Activated T-helper 1 cell treated with anti-CD3 and anti-CD28 coated beads, Interleukin-12 subunit alpha, Interleukin-12 subunit beta, Interleukin-2, Interleukin-4 antibody, amounts not matched to agents 30 ng/mL and 10 ng/mL and 1 ng/mL, durations not matched to agents 14 hours and 24 hours and 36 hours (primary cell): ENCODE measurements at regions of chr12 and their contacts with region 1.

Region 1: DNA sequence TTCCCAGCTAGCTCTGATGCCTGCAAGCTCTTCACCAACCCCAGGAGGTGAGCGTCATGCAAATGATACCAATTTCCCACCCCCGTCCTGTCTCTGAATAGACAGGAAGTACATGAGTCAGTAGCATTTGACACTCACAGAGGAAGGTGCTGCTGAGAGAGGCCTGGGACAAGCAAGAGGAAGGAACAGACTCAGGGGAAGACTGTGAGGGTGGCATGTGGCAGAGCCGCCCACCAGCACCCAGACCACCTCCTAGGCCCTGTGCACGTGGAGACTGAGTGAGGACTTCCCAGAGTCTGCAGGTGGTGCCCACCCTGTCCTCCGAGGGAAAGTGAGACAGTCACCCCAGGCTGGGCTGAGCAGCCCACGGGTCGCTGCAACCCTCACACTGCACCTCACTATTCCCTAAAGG is 199.5 kb upstream of the SFSWAP start:
- DNase-seq: peak; percentile 48
- H3K4me3 Mint-ChIP-seq: no peak overlapping the region
- H3K27ac Mint-ChIP-seq: peak overlapping the region; percentile 40
- H3K4me1 Mint-ChIP-seq: peaks cover 15% of the 10 kb centered on the region
- H3K27me3 Mint-ChIP-seq: no peaks in the 10 kb centered on the region

Region 2: DNA sequence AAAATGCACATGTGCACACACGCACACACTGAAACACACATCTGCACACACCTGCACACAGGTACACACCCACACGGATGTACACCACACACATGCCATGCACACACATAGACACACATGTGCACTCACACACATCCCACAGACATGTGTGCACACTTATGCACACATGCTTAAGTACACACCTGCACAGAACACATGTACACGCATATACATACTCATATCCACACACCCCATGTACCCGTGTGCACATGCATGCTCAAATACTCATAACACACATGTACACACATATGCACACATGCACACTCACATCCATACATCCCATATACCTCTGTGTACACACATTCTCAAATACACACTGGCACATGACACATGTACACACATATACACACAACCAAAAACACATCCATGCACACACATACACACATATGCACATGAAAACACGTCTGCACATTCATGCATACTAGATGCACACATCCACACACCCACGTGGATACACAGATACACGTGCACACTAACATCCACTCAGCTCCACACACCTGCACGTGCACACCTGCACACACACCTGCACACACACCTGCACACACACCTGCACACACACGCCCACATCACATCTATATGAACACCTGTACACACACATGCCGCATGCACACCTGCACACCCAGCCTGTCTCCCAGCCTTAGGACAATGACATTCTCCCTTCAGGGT is 221.0 kb before region 1 on chr12:
- intact Hi-C with region 1: no loop called
- DNase-seq: no peak
- H3K4me3 Mint-ChIP-seq: no peak overlapping the region
- H3K27ac Mint-ChIP-seq: no peak overlapping the region
- H3K4me1 Mint-ChIP-seq: no peaks in the 10 kb centered on the region
- H3K27me3 Mint-ChIP-seq: no peaks in the 10 kb centered on the region

Region 3: DNA sequence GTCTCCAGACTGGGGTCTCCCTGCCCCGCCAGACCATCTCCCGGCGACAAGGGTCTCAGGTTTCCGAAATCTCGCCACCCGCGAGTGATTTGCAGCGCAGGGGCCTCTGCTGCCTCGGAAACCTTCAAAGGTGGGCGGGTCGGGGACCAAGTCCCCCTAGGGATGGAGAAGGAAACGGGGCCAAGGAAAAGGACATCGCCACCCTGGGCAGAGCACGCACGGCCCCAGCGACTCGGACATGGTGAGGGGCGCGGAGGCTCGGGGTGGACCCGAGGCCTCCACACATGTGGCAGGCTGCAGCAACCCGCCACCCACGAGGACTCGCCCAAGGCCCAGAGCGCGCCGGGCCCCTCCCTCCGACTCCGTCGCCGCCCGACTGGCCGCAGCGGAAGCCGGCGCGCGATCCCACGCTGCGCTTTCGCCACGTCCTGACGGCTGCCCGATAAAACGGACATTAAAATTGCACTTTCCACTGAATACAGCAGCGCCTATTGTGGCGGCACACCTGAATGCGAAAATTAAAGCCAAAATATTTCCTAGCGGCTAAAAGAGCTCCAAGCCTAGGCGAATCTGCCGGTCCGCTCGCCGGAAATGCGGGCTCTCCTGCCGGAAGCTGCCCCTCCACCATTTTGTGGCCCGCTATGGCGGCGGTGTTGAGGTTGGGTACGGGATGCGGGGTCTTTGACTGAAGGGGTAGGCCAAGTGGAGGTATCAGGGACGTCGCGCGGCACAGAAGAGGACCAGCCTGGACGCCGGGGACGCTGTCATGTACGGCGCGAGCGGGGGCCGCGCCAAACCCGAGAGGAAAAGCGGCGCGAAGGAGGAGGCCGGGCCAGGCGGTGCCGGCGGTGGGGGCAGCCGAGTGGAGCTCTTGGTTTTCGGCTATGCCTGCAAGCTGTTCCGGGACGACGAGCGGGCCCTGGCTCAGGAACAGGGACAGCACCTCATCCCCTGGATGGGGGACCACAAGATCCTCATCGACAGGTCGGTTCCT is 199.4 kb after region 1 on chr12 and contains the start of gene SFSWAP:
- intact Hi-C with region 1: loop called (anchors 1 kb)
- DNase-seq: peak; percentile 72
- H3K4me3 Mint-ChIP-seq: peak within 1 kb of the TSS; percentile 93
- H3K27ac Mint-ChIP-seq: peak within 1 kb of the TSS; percentile 92
- H3K4me1 Mint-ChIP-seq: peaks cover 26% of the 10 kb centered on the region
- H3K27me3 Mint-ChIP-seq: peaks cover 4% of the 10 kb centered on the region
- total RNA-seq, gene SFSWAP: 65.3 and 69.3 TPM in 2 replicates

Region 4: GRCh38 chr12:131830335-131830913 is 319.0 kb after region 1 on chr12:
- intact Hi-C with region 1: loop called (anchors 1 kb)
- DNase-seq: peak; percentile 18
- H3K4me3 Mint-ChIP-seq: peak overlapping the region; percentile 62
- H3K27ac Mint-ChIP-seq: no peak overlapping the region
- H3K4me1 Mint-ChIP-seq: no peaks in the 10 kb centered on the region
- H3K27me3 Mint-ChIP-seq: peaks cover 38% of the 10 kb centered on the region